Lower leg skin (tissue), 4 donors: ENCODE measurements at regions of chr5 and their contacts with region 1.

Region 1: DNA sequence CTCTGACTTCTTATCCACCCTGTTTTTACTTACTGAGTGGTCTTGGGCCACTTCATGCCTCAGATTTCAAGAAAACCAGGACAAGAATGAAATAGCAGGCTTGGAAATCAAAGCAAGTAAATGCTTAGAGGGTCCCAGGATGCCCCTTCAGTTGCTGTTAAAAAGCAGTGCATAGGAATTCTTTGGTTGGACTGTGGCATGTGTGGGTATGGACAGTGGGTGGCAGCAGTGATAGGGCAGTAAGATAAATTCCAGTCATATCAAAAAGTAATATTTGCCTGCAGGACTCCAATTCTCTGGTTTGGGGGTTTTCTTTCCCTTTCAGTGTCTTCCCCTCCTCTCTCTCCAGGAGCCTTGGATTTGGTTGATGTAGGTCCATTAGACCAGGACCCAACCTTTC is 306.7 kb upstream of the CLINT1 start:
- DNase-seq: no peak
- H3K4me3 ChIP-seq: no peak overlapping the region
- CTCF ChIP-seq: no peak
- POLR2A ChIP-seq: no peak

Region 2: DNA sequence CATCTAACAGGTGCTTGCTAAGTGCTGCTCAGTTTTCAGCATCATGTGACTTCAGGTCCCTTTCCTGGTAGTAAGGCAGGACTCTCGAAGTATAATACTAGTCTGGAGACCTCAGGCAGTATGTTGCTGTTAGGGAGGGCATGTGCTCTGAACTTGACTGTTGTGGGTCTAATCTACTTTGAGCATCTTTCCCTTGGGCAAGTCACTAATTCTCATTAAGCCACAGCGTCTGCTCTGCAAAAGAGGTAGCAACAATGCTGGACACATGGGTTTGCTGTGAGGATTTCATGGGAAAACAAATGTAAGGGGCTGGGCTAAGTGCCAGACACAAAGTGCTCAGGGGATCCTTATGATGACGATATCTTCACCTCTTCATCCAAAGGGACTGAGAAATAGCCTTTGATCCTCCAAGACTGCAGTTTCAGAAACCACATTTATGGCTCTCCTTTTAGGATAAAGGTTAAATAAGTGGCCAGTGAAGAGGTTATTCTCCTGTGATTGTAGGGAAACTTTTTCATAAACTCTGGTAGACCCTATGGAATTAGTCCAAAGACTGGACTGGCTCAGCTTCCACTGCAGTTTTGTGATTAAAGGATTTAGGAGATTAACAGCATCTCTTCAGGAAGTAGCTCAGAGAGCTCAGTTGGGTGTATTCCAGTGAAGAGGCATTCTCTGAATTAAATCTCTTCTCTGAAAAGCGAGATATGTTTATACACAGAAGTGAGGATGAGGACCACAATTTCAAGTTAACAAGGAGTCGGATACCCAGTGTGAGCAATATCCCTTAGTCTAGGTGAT is 1622.1 kb before region 1 on chr5:
- intact Hi-C with region 1: no loop called
- DNase-seq: no peak
- H3K4me3 ChIP-seq: no peak overlapping the region
- CTCF ChIP-seq: no peak
- POLR2A ChIP-seq: no peak

Region 3: DNA sequence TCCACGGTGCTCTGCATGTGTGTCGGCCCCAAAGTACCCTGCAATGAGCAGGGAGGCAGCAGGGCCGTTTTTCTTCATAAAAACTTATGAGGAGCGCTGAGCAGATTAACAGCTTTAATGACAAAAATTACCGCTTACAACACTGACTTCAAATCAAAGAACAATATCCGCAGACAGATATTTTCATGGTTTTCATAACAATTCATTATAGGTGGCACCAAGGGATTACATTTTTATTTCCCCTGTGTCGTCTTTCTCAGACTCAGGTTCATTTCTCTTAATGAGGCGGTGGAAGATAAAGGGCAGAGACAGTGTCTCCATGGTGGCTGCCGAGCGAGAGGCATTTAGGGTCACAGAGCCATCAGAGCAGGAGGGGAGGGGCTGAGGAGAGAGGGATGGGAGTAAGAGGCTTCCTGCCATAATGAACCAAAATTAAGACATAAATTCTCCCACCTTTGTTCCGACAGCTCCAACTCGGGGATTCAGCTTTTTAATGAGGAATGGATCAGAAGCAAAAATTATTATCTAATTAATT is 66.0 kb before region 1 on chr5:
- intact Hi-C with region 1: loop called (anchors 10 kb)
- DNase-seq: no peak
- H3K4me3 ChIP-seq: no peak overlapping the region
- CTCF ChIP-seq: no peak
- POLR2A ChIP-seq: no peak